ENCODE measurements at regions of chr6 and their contacts with region 1.

Region 1: DNA sequence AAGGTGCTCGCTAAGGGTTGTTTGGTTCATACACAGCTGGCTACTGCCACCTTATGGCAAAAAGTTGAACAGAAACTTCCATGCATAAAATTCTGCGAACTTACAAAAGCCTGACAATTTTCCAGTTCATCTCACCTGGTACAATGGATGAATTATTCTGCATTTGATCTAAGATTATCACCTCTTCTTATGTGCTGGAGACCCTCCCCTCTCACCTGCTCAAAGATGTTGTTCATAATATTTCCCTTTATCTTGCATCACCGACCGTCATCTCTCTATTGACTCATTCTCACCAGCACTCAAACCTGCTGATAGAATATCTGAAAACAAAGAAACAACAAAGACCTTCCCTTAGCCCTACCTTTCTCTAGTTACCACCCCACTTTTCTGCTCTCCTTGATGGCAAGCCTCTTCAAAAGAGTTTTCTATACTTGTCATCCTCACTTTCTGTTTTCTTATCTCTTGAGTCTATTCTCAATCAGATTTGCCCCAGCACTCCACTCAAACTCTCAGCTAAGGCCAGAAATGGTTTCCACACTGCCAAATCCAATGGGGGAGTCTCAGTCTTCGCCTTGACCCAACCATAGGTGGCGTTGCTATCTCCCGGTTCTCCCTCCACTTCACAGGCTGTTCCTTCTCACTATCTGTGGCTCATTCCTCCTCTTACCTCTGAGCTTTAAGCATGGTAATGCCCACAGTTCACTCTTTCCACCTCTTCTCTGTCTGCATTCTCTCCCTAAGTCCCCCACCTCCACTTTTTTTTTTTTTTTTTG is 25.8 kb downstream of the SNRNP48 start:
- DNase-seq: no peak
- ATAC-seq: peak; percentile 68
- H3K4me3 ChIP-seq: no peak overlapping the region
- H3K27ac ChIP-seq: no peak overlapping the region
- H3K4me1 ChIP-seq: no peaks in the 10 kb centered on the region
- H3K27me3 ChIP-seq: no peaks in the 10 kb centered on the region

Region 2: DNA sequence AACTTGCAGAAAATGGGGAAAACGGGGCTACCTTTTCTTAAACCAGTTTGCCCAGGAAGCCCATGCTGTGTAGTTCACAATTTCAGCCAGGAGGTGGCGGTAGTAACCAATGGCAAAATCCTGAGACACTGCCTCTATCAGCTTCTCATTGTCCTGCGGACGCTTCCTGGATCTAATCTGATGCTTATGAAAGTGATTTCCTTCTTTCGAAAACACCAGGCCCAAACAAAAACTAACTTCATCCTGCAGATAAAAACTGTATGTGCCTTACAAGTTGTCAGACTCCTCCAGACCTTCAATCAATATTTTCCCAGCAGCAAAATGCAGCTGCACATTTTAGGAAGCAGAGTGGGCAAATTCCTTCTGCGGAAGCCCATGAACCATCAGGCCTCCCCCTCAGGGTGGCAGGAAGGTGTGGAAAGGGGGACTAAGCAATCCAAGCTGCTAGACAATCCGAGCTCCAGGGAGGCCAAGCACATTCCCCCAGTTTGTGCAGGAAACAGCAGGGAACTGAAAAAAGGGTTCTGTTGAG is 938.8 kb before region 1 on chr6:
- intact Hi-C with region 1: loop called (anchors 10 kb)
- DNase-seq: peak; percentile 80 to 84
- ATAC-seq: peak; percentile 91
- H3K4me3 ChIP-seq: no peak overlapping the region
- H3K27ac ChIP-seq: no peak overlapping the region
- H3K4me1 ChIP-seq: no peaks in the 10 kb centered on the region
- H3K27me3 ChIP-seq: no peaks in the 10 kb centered on the region

Region 3: GRCh38 chr6:7276199-7276524 is 339.6 kb before region 1 on chr6:
- intact Hi-C with region 1: loop called (anchors 2 to 5 kb)
- DNase-seq: no peak
- ATAC-seq: no peak
- H3K4me3 ChIP-seq: no peak overlapping the region
- H3K27ac ChIP-seq: no peak overlapping the region
- H3K4me1 ChIP-seq: no peaks in the 10 kb centered on the region
- H3K27me3 ChIP-seq: no peaks in the 10 kb centered on the region

Region 4: DNA sequence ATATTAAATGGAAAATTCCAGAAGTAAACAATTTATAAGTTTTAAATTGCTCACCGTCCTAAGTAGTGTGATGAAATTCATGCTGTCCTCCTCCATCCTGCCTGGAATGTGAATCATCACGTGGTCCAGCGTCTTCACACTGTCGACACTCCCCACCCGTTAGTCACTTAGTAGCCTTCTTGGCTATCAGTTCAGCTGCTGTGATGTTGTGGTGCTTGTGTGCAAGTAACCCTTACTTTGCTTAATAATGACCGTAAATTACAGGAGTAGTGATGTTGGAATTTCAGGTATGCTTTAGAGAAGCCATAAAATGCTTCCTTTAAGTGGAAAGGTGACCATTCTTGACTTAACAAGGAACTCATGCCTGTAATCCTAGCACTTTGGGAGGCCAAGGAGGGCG is 201.0 kb before region 1 on chr6:
- intact Hi-C with region 1: loop called in 1 of 2 experiments (anchors 10 kb)
- DNase-seq: no peak
- ATAC-seq: no peak
- H3K4me3 ChIP-seq: no peak overlapping the region
- H3K27ac ChIP-seq: no peak overlapping the region
- H3K4me1 ChIP-seq: no peaks in the 10 kb centered on the region
- H3K27me3 ChIP-seq: no peaks in the 10 kb centered on the region

Measured in aorta (tissue), 5 donors.